Posterior cingulate gyrus (tissue), 11 donors: ENCODE measurements at regions of chr9 and their contacts with region 1.

Region 1: DNA sequence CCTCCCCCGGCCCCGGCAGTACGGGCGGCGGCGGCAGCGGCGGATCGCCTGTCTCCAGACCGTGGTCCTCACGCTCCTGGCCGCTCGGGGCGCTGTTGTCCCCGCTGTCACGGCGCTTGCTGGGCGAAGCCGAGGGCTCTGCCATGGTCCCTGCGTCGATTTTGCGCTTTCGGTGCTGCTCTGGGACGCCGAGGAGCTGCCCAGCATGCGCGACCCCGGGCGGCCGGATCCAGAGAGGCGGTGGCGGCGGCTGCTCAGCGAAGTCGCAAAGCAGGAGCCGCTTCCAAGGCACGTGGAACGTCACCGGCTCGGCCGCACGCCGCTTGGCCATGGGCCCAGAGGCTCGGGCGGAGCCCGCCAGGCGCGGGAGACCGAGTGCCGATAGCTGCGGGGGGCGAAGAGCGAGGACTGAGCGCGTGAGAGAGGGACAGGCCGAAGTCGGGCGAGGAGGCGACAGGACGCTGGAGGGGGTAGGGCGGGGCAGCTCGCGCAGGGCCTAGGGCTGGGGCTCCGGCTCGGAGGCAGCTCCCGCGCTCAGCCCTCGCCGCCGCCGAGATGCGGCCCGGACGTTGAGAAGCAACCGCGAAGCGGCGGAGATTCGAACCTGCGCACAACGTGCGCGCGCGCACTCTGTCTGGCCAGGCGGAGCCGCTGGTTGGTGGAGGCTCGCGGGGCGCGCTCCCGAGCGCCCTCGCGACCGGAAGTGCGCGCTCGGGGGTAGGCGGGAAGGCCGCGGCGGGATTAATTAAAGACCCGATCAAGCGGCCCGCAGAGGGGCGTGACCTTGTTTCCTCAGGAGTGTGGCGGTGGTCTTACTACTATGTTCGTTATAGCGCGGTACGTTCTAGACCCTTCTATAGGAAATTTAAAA is at the start of gene C9orf40:
- DNase-seq: peak; percentile 82 to 98 (median 90)

Region 2: DNA sequence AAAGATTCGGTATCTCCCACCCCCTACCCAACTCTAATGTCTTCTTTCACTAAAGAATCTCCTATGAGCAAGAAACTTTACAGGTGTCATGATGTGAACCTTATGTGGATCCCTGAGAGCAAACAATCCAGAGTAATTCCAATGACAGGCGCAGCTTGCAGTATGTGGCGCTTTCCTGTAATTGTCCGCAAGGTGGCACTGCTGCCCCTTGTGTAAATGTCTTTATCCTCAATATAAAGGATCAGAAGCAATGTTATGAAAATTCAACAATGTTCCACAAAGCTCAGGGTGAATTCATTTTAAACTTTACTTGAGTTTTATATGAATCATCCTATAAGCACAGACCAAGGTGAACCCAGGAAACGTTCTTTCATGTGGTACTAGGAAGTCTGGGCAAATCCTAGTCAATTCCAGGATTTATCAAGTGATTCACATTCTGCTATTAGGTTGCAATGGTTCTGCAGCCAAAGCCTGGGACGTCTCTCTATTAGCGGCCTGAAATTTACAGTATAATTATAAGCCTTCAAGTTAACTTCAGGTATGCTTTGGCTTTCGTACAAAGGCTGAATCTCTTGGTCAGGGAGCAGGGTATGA is 178.5 kb before region 1 on chr9:
- intact Hi-C with region 1: loop called (anchors 5 kb)
- DNase-seq: peak; percentile 69 to 97 (median 86)

Region 3: GRCh38 chr9:75001719-75002422 is 49.4 kb after region 1 on chr9:
- intact Hi-C with region 1: loop called (anchors 2 kb)
- DNase-seq: no peak

Region 4: GRCh38 chr9:75071530-75072124 is 119.1 kb after region 1 on chr9:
- intact Hi-C with region 1: no loop called
- DNase-seq: peak in 1 of 10 donors; percentile 83

Region 5: DNA sequence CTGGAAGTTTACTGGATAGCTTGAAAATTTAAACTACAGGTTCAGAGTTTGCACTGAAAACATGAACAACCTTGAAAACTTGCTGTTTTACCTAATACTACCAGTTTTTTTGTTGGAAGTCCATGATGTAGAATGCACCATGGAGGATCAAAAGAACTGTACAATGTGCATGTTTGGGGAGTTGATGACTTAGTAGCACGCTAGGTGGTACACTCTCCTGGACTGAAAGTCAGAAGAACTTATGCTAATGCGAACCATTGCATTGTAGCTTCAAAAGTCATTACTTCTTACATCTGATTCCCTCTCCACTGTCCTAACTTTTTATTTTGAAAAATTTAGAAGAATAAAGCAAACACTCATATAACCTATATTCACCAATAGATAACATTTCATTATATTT is 346.8 kb after region 1 on chr9:
- intact Hi-C with region 1: no loop called
- DNase-seq: no peak